ENCODE measurements at regions of chr6 and their contacts with region 1.

Region 1: DNA sequence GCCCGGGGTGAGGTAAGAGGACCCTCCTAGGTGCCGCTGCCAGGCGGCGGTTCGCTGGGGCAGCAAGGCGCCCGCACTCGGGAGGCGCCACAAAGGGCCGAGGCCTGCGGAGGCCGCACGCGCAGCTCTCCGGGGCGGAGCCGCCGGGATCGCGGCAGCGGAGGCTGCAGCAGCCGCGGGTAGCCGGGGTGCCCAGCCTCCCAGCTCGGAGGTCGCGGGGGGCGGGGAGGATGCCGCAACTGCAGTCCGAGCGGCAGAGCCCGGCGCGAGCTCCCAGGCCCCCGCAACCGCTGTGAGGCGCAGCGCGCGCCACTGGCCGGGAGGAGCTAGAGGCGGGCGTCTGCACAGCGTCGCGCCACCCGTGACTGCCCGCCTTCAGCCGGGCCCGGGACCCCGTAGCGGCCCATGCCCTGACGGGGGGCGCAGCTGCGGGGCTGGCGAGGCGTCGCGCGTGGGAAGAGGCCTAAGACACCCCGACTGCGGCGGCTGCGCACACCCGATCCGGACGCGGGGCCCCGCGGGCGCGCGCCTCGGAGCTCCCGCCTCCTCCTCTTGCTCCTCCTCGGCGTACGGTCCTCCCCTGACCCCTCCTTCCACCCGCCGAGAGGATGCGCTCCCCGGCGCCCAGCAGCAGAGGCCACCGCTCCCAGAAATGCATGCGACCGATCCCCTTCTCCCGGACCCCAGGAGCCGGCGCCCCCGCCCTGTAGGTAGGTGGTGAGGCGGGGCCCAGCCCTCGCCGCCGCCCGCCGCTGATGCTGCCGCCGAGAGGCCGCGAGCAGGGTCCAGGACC is at the start of gene NCOA7:
- DNase-seq: peak; percentile 80 to 84 (median 83)
- H3K4me3 ChIP-seq: peak within 1 kb of the TSS; percentile 78 to 79
- H3K4me3 Mint-ChIP-seq: peak within 1 kb of the TSS; percentile 93 to 96 (median 94)
- H3K27ac ChIP-seq: peak within 1 kb of the TSS; percentile 82
- H3K27ac Mint-ChIP-seq: peak within 1 kb of the TSS; percentile 97 to 99 (median 98)
- H3K4me1 ChIP-seq: peaks cover 58% of the 10 kb centered on the region
- H3K4me1 Mint-ChIP-seq: peaks cover 39 to 63% (median 51%) of the 10 kb centered on the region in 4 donors
- H3K27me3 ChIP-seq: no peaks in the 10 kb centered on the region
- H3K27me3 Mint-ChIP-seq: no peaks in the 10 kb centered on the region
- total RNA-seq, gene NCOA7: 73.6 to 75.1 TPM

Region 2: DNA sequence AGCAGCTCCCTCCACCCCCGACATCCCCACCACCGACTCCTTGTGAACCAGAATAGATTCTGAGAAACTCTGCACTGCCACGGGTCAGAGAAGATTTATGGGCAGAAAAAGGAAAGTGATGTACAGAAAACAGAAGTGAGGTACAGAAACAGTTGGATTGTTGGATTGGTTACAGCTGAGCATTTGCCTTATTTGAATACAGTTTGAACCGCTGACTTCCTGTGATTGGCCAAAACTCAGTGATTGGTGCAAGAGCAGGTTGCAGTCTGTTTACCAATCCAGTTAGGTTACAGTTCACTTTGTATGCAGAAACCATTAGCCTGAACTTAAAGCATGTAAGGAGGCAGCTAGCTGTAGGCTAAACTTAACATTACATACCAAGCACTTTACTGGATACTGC is 357.6 kb before region 1 on chr6:
- CTCF ChIA-PET with region 1: no interaction called
- POLR2A ChIA-PET with region 1: no interaction called
- intact Hi-C with region 1: no loop called
- DNase-seq: no peak
- H3K4me3 ChIP-seq: no peak overlapping the region
- H3K4me3 Mint-ChIP-seq: no peak overlapping the region
- H3K27ac ChIP-seq: no peak overlapping the region
- H3K27ac Mint-ChIP-seq: no peak overlapping the region
- H3K4me1 ChIP-seq: no peaks in the 10 kb centered on the region
- H3K4me1 Mint-ChIP-seq: no peaks in the 10 kb centered on the region
- H3K27me3 ChIP-seq: no peaks in the 10 kb centered on the region
- H3K27me3 Mint-ChIP-seq: peaks cover 7 to 15% of the 10 kb centered on the region in 2 donors

Region 3: DNA sequence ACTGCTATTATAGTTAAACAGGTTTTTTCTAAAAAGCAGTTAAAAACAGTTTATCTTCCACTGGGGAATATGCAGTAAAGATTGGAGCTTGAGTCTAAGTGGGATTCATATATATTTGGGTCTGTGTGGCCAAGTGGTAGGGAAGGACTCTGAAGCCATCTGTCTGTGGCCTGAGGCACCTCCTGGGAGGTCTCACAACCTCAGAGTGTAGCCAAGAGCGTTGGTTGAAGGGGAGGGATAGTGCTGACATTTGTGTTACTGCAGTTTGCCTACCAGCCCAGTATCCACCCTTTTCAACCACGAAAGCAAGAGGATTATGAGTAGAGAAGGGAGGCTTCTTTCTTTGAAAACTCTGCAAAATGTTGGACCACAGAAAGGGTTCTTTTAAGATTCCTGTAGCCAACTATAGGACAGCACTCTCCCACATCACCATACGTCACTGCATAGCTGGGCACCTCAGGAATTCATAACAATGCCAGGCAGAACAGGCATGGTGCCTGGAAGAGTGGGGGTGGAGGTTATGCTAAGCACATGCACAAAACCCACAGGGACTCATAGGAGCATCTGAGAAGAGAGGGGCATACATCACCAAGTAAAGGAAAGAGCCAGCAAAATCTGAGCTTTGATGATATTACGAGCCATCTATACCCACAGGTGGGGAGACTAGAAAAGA is 131.7 kb before region 1 on chr6:
- CTCF ChIA-PET with region 1: no interaction called
- POLR2A ChIA-PET with region 1: no interaction called
- intact Hi-C with region 1: no loop called
- DNase-seq: no peak
- H3K4me3 ChIP-seq: no peak overlapping the region
- H3K4me3 Mint-ChIP-seq: no peak overlapping the region
- H3K27ac ChIP-seq: no peak overlapping the region
- H3K27ac Mint-ChIP-seq: no peak overlapping the region
- H3K4me1 ChIP-seq: no peaks in the 10 kb centered on the region
- H3K4me1 Mint-ChIP-seq: peaks cover 0 to 3% (median 1%) of the 10 kb centered on the region in 4 donors
- H3K27me3 ChIP-seq: no peaks in the 10 kb centered on the region
- H3K27me3 Mint-ChIP-seq: peaks cover 4 to 10% of the 10 kb centered on the region in 2 donors

Region 4: DNA sequence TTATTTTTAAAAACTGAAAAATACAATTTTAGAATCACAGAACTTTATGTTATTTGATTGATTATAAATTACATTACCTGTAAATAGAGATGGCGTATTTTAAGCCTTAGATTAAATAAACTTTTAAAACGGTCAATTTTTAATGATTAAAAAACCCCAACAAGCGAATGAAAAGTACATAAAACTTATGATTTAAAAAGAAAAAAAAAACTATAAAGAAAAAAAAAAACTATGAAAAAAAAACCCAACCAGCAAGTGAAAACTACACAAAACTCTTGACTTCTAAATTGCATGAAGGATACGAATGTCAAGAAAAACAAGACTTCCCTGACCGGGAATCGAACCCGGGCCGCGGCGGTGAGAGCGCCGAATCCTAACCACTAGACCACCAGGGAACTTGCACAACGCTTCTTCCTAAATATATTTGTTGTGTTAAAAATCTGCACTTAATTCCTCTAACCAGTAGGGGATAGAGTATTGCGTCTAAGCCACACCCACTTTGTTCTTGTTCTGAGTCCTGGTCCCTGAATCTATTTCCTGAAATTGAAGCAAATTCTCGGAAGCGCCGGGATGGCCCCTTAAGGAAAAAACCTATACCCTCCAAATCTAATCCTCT is 10.5 kb before region 1 on chr6:
- CTCF ChIA-PET with region 1: interaction called, 148 read pairs
- POLR2A ChIA-PET with region 1: interaction called, 404 read pairs
- intact Hi-C with region 1: loop called (anchors 1 kb)
- DNase-seq: peak; percentile 87 to 94 (median 92)
- H3K4me3 ChIP-seq: peak overlapping the region; percentile 69 to 92
- H3K4me3 Mint-ChIP-seq: no peak overlapping the region
- H3K27ac ChIP-seq: peak overlapping the region; percentile 72
- H3K27ac Mint-ChIP-seq: no peak overlapping the region
- H3K4me1 ChIP-seq: peaks cover 17% of the 10 kb centered on the region
- H3K4me1 Mint-ChIP-seq: peaks cover 10 to 13% (median 12%) of the 10 kb centered on the region in 4 donors
- H3K27me3 ChIP-seq: no peaks in the 10 kb centered on the region
- H3K27me3 Mint-ChIP-seq: no peaks in the 10 kb centered on the region

Region 5: DNA sequence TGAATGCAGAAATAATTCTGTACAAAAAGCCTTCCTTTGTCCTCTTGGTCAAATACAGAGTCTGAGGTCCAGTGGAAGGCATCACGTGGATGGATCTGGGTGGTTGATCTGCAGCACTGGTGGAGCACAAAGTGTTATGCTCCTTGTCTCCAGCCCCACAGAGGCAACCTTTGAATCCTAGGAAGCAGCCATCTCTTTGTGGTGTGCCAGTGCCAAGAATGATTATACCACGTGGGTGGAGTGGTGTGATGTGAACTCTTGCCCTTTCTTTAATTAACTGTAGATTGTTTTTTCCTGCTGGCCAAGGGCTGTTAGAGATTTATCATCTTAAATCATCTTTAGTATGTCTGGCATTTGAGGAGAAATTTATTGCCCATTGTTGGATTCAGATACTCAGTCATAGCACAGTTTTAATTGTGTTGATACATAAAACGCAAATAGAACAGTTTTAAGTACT is 31.3 kb after region 1 on chr6:
- CTCF ChIA-PET with region 1: interaction called, 152 read pairs
- POLR2A ChIA-PET with region 1: interaction called, 24 read pairs
- intact Hi-C with region 1: no loop called
- DNase-seq: no peak
- H3K4me3 ChIP-seq: no peak overlapping the region
- H3K4me3 Mint-ChIP-seq: peak overlapping the region in 3 of 8 donors; percentile 18 to 40 (median 38)
- H3K27ac ChIP-seq: no peak overlapping the region
- H3K27ac Mint-ChIP-seq: peak overlapping the region in 4 of 7 donors; percentile 11 to 63 (median 50)
- H3K4me1 ChIP-seq: peaks cover 39% of the 10 kb centered on the region
- H3K4me1 Mint-ChIP-seq: peaks cover 42 to 68% (median 50%) of the 10 kb centered on the region in 4 donors
- H3K27me3 ChIP-seq: no peaks in the 10 kb centered on the region
- H3K27me3 Mint-ChIP-seq: no peaks in the 10 kb centered on the region

Region 6: GRCh38 chr6:125858427-125859320 is 68.1 kb after region 1 on chr6:
- CTCF ChIA-PET with region 1: interaction called, 32 read pairs
- POLR2A ChIA-PET with region 1: interaction called, 23 read pairs
- intact Hi-C with region 1: loop called (anchors 2 kb)
- DNase-seq: peak; percentile 8 to 40 (median 19)
- H3K4me3 ChIP-seq: no peak overlapping the region
- H3K4me3 Mint-ChIP-seq: peak overlapping the region in 1 of 8 donors; percentile 15
- H3K27ac ChIP-seq: no peak overlapping the region
- H3K27ac Mint-ChIP-seq: peak overlapping the region in 5 of 7 donors; percentile 62 to 87 (median 70)
- H3K4me1 ChIP-seq: peaks cover under 1% of the 10 kb centered on the region
- H3K4me1 Mint-ChIP-seq: peaks cover 7 to 11% (median 10%) of the 10 kb centered on the region in 4 donors
- H3K27me3 ChIP-seq: no peaks in the 10 kb centered on the region
- H3K27me3 Mint-ChIP-seq: no peaks in the 10 kb centered on the region

Region 7: GRCh38 chr6:125906158-125906998 is 115.8 kb after region 1 on chr6:
- CTCF ChIA-PET with region 1: interaction called, 50 read pairs
- POLR2A ChIA-PET with region 1: interaction called, 16 read pairs
- intact Hi-C with region 1: loop called (anchors 1 kb)
- DNase-seq: peak; percentile 22 to 44 (median 39)
- H3K4me3 ChIP-seq: no peak overlapping the region
- H3K4me3 Mint-ChIP-seq: peak overlapping the region in 1 of 8 donors; percentile 21
- H3K27ac ChIP-seq: no peak overlapping the region
- H3K27ac Mint-ChIP-seq: peak overlapping the region; percentile 9 to 86 (median 68)
- H3K4me1 ChIP-seq: peaks cover 11% of the 10 kb centered on the region
- H3K4me1 Mint-ChIP-seq: peaks cover 16 to 33% (median 21%) of the 10 kb centered on the region in 4 donors
- H3K27me3 ChIP-seq: no peaks in the 10 kb centered on the region
- H3K27me3 Mint-ChIP-seq: no peaks in the 10 kb centered on the region

Region 8: DNA sequence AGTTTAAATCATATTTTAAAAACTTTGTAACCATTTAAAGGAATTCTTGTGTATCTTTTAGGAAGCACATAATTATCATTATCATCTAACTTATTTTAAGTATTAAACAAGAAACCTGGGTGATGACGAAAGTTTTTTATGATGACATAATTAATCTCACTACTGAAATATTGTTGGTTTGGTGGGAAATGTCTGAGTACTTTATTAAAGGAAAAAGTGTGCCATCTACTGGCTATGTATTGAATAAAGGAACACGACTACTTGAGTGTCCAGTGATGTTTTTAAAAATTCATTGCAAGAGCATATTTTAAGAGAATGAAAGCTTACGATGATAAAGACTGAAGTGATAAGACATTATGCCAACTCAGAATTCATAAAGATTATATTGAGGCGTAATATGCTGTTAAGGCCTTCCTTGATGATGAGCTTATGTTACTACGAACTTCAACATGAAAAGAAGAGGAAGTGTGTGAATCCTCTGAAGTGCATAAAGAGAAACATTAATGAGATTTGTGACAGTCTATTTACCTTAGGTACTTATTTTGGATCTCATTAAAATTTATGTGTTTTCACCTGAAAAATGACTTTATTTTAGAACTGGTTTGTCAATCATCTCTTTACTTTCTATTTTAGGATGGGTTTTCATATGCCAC is 183.8 kb after region 1 on chr6:
- CTCF ChIA-PET with region 1: interaction called, 24 read pairs
- POLR2A ChIA-PET with region 1: interaction called, 16 read pairs
- intact Hi-C with region 1: no loop called
- DNase-seq: peak in 4 of 5 donors; percentile 43 to 53 (median 46)
- H3K4me3 ChIP-seq: no peak overlapping the region
- H3K4me3 Mint-ChIP-seq: no peak overlapping the region
- H3K27ac ChIP-seq: no peak overlapping the region
- H3K27ac Mint-ChIP-seq: peak overlapping the region in 3 of 7 donors; percentile 14 to 33 (median 23)
- H3K4me1 ChIP-seq: no peaks in the 10 kb centered on the region
- H3K4me1 Mint-ChIP-seq: peaks cover 0 to 10% (median 9%) of the 10 kb centered on the region in 4 donors
- H3K27me3 ChIP-seq: no peaks in the 10 kb centered on the region
- H3K27me3 Mint-ChIP-seq: no peaks in the 10 kb centered on the region

Region 9: GRCh38 chr6:126447367-126447766 is 656.8 kb after region 1 on chr6:
- CTCF ChIA-PET with region 1: no interaction called
- POLR2A ChIA-PET with region 1: no interaction called
- intact Hi-C with region 1: no loop called
- DNase-seq: no peak
- H3K4me3 ChIP-seq: no peak overlapping the region
- H3K4me3 Mint-ChIP-seq: no peak overlapping the region
- H3K27ac ChIP-seq: no peak overlapping the region
- H3K27ac Mint-ChIP-seq: no peak overlapping the region
- H3K4me1 ChIP-seq: no peaks in the 10 kb centered on the region
- H3K4me1 Mint-ChIP-seq: no peaks in the 10 kb centered on the region
- H3K27me3 ChIP-seq: no peaks in the 10 kb centered on the region
- H3K27me3 Mint-ChIP-seq: no peaks in the 10 kb centered on the region

Measured in CD4-positive, alpha-beta memory T cell (primary cell).